Dendritic cell treated with granulocyte-macrophage colony-stimulating factor and Interleukin-4, amounts not matched to agents 40 ng/mL and 50 ng/mL, for 4 days (primary cell): ENCODE measurements at regions of chr5 and their contacts with region 1.

Region 1: GRCh38 chr5:175696139-175696854 is 38.4 kb downstream of the HRH2 start:
- H3K4me3 Mint-ChIP-seq: peak overlapping the region; percentile 7
- H3K27ac Mint-ChIP-seq: peak overlapping the region; percentile 93
- H3K4me1 Mint-ChIP-seq: peaks cover 59% of the 10 kb centered on the region
- H3K27me3 Mint-ChIP-seq: no peaks in the 10 kb centered on the region

Region 2: DNA sequence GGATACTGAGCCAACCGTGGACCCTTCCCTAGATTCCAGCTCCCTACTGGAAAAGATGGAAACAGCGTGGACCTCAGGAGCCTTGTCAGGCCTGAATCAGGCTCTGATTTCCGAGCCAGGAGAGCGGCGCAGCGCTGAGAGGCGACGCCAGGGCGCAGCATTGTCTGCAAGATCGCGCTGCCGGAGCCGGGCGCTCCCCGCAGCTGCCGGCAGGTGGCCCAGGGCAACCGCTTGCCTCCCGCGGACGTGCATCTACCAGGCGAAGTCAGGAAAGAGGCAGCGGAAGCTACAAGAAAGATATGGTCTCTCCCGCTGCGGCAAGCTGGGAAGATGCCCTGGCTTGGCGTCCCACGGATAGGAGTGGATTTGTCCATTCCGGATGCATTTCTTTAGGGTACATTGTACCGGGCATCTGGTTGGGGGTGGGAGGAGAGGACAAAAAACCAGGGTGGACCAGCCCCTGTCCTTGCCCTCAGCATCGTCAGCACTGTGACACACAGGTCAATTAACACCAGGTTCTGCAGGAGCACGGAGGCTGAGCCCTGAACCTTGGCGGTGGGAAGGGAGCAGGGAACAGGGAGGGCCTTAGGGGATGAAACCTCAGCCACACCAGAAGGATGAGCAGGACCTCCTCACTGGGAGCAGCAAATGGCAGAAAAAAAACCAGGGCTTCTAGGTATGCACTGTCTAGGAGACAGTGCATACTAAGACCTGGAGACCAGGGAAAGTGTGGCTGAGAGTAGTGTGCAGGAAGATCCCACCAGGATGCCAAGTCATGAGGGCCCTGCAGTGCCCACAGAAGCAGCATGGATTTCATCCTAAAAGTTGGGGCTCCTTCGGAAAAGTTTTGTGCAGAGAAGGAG is 162.0 kb before region 1 on chr5:
- intact Hi-C with region 1: loop called (anchors 1 kb)
- H3K4me3 Mint-ChIP-seq: peak overlapping the region; percentile 53
- H3K27ac Mint-ChIP-seq: peak overlapping the region; percentile 65
- H3K4me1 Mint-ChIP-seq: peaks cover 28% of the 10 kb centered on the region
- H3K27me3 Mint-ChIP-seq: peaks cover 6% of the 10 kb centered on the region

Region 3: DNA sequence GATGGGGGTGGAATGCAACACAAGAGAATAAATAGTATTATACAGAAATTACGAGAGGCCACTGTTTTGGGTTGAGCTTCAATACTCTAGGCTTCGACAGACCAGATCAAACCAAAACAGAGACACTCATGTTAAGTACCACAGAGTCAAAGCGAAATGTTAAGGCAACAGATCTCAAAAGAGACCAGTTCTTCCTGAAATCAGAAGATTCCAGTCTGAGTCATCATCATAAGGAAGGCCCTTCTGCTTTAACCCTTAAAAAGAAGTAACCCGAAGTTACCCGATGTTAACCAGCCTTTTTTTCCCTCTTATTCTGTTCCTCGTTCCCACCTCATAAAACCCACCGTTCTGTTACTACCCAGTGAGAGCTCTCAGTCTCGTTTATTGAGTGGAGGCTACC is 142.0 kb before region 1 on chr5:
- intact Hi-C with region 1: loop called (anchors 5 kb)
- H3K4me3 Mint-ChIP-seq: no peak overlapping the region
- H3K27ac Mint-ChIP-seq: peak overlapping the region; percentile 76
- H3K4me1 Mint-ChIP-seq: peaks cover 71% of the 10 kb centered on the region
- H3K27me3 Mint-ChIP-seq: peaks cover 7% of the 10 kb centered on the region

Region 4: DNA sequence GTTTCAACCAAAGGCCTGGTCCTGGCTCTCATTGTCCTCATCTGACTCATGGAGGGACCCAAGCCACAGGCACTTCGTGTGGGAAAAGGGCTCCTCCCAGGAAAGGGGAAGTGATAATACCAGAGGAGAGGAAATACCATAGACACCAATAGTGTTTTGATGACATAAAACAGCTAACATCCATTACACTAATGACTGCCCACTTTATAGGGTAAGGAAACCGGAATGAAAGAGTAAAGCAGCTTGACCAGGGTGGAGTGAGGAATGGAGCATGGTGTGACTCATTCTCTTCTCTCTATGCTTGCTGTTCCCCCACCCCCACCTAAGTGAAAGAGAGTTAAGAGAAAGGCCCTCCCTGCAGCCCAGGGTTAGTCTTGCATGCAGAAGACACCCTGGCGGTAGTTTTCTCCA is 105.8 kb before region 1 on chr5:
- intact Hi-C with region 1: loop called (anchors 10 kb)
- H3K4me3 Mint-ChIP-seq: no peak overlapping the region
- H3K27ac Mint-ChIP-seq: peak overlapping the region; percentile 85
- H3K4me1 Mint-ChIP-seq: peaks cover 39% of the 10 kb centered on the region
- H3K27me3 Mint-ChIP-seq: peaks cover 15% of the 10 kb centered on the region

Region 5: GRCh38 chr5:175609526-175609925 is 86.8 kb before region 1 on chr5:
- intact Hi-C with region 1: no loop called
- H3K4me3 Mint-ChIP-seq: no peak overlapping the region
- H3K27ac Mint-ChIP-seq: no peak overlapping the region
- H3K4me1 Mint-ChIP-seq: peaks cover 12% of the 10 kb centered on the region
- H3K27me3 Mint-ChIP-seq: peaks cover 17% of the 10 kb centered on the region

Region 6: DNA sequence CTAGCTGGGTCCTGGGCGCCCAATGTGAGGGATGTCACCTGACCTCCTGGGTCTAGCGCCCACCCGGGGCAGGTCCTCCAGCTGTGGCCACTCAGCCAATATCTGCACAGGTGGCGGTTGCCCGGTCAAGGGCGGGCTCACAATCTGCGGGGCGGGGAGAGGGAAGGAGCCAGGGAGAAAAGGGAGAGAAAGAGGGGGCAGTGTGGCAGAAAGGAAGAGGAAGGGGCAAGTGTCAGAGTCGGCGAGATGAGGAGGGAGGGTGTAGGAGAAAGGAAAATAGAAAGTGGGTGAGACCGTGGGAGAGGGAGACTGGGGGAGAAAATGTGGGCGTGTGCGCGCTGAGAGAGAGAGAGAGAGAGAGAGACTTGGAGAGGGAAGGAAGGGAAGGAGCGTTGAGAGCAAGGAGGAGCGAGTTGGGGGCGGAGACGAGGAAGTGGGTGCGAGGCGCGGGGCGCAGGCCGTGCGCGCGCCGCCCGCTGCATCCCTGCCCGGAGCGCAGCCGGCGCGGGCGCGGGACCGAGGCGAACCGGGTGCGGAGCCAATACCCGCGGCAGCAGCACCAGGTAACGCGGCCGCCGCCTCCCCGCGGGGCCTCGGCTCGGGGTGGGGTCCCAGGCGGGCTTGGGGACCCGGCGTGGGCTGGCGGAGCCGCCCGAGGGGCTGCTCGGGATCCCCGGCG is 38.6 kb before region 1 on chr5 and contains the start of gene HRH2:
- intact Hi-C with region 1: loop called (anchors 5 kb)
- H3K4me3 Mint-ChIP-seq: peak within 1 kb of the TSS; percentile 99
- H3K27ac Mint-ChIP-seq: peak within 1 kb of the TSS; percentile 87
- H3K4me1 Mint-ChIP-seq: peaks cover 85% of the 10 kb centered on the region
- H3K27me3 Mint-ChIP-seq: no peaks in the 10 kb centered on the region

Region 7: DNA sequence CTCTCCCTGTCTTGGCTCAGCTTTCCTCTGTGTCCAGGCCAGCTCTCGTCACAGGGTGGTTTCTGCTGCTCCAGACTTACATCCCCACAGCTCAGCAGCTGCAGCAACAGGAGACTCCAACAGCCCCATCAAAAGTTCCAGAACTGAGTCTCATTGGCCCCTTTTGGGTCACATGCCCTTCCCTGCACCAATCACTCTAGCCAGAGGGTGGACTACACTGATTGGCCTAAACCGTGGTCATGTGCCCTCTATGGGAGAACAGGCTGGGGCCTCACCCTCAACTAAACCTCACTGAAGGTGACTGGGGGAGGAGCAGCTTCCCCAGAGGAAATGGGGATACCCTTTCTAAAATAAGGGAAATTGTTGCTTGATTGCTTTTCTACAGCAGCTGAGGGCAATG is 130.7 kb after region 1 on chr5:
- intact Hi-C with region 1: no loop called
- H3K4me3 Mint-ChIP-seq: no peak overlapping the region
- H3K27ac Mint-ChIP-seq: no peak overlapping the region
- H3K4me1 Mint-ChIP-seq: no peaks in the 10 kb centered on the region
- H3K27me3 Mint-ChIP-seq: peaks cover 7% of the 10 kb centered on the region

Region 8: DNA sequence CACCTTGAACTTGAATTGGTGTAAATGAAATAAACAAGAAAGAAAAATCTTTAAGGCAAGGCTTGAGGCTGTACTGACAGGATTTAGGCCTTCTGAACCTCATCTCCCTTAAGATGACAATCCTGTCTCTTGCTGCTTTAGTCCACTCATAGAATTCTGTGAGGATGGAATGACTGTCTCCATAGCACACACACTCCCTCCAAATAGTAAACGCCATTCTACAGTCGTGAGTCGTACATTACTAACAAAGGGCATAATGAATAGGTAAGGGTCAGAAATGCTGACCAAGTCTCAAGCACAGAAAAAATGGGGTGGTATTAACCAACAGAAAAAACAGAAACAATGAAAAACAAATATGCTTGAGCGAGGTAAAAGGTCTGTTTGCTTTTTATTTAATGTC is 470.1 kb after region 1 on chr5:
- intact Hi-C with region 1: no loop called
- H3K4me3 Mint-ChIP-seq: no peak overlapping the region
- H3K27ac Mint-ChIP-seq: no peak overlapping the region
- H3K4me1 Mint-ChIP-seq: peaks cover 5% of the 10 kb centered on the region
- H3K27me3 Mint-ChIP-seq: peaks cover 13% of the 10 kb centered on the region